ENCODE measurements at regions of chr1 and their contacts with region 1.

Region 1: GRCh38 chr1:163174524-163175437 is 27.9 kb downstream of the RGS5 start:
- DNase-seq: peak; percentile 59
- H3K4me3 Mint-ChIP-seq: no peak overlapping the region
- H3K27ac Mint-ChIP-seq: no peak overlapping the region
- H3K4me1 Mint-ChIP-seq: no peaks in the 10 kb centered on the region
- H3K27me3 Mint-ChIP-seq: peaks cover 6% of the 10 kb centered on the region

Region 2: GRCh38 chr1:162847839-162848453 is 326.8 kb before region 1 on chr1:
- CTCF ChIA-PET with region 1: interaction called, 35 read pairs
- POLR2A ChIA-PET with region 1: no interaction called
- intact Hi-C with region 1: no loop called
- DNase-seq: peak; percentile 80
- H3K4me3 Mint-ChIP-seq: no peak overlapping the region
- H3K27ac Mint-ChIP-seq: no peak overlapping the region
- H3K4me1 Mint-ChIP-seq: no peaks in the 10 kb centered on the region
- H3K27me3 Mint-ChIP-seq: peaks cover 1% of the 10 kb centered on the region

Region 3: DNA sequence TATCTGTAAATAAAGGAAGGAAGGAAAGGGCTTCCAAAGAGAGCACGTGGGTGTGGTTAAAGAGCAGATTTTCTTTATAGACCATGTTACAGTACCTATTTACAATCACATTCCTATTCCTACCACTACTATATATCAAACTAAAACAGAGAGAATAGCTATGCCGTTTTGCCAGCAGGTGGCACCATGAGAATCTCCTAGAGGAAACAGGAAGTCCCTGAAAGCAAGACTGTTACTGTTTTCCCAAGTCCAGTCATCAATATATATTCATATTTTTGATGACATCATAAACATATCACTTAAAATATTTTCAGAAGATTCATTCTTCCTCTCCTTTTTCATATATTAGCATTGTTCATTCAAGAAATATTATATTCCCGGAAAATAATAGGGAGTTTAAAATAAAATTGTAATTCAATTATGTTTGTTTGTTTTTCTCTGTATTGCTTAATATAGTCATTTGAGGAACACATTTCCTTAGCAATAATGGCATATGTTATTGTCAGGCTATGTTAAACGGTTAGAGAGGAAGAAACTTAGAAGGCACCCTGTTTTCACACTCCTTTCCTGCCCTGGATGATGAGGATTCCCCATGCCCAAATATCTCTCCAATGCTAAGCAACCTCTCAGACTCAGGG is 320.4 kb before region 1 on chr1:
- CTCF ChIA-PET with region 1: interaction called, 35 read pairs
- POLR2A ChIA-PET with region 1: no interaction called
- intact Hi-C with region 1: loop called (anchors 2 kb)
- DNase-seq: peak; percentile 63
- H3K4me3 Mint-ChIP-seq: no peak overlapping the region
- H3K27ac Mint-ChIP-seq: no peak overlapping the region
- H3K4me1 Mint-ChIP-seq: no peaks in the 10 kb centered on the region
- H3K27me3 Mint-ChIP-seq: peaks cover 1% of the 10 kb centered on the region

Region 4: GRCh38 chr1:162878000-162878596 is 296.7 kb before region 1 on chr1:
- CTCF ChIA-PET with region 1: interaction called, 3 read pairs
- POLR2A ChIA-PET with region 1: no interaction called
- intact Hi-C with region 1: loop called (anchors 1 kb)
- DNase-seq: peak; percentile 53
- H3K4me3 Mint-ChIP-seq: no peak overlapping the region
- H3K27ac Mint-ChIP-seq: no peak overlapping the region
- H3K4me1 Mint-ChIP-seq: no peaks in the 10 kb centered on the region
- H3K27me3 Mint-ChIP-seq: peaks cover 20% of the 10 kb centered on the region

Region 5: GRCh38 chr1:163071405-163072255 is 103.2 kb before region 1 on chr1:
- CTCF ChIA-PET with region 1: interaction called, 3 read pairs
- POLR2A ChIA-PET with region 1: no interaction called
- intact Hi-C with region 1: loop called (anchors 5 kb)
- DNase-seq: peak; percentile 55
- H3K4me3 Mint-ChIP-seq: no peak overlapping the region
- H3K27ac Mint-ChIP-seq: no peak overlapping the region
- H3K4me1 Mint-ChIP-seq: no peaks in the 10 kb centered on the region
- H3K27me3 Mint-ChIP-seq: peaks cover 23% of the 10 kb centered on the region

Measured in activated CD4-positive, alpha-beta memory T cell treated with anti-CD3 and anti-CD28 coated beads for 36 hours (primary cell).